Vagina (tissue), 2 donors: ENCODE measurements at regions of chr4 and their contacts with region 1.

Region 1: GRCh38 chr4:174496631-174497432 is 25.5 kb downstream of the HPGD start:
- DNase-seq: no peak
- H3K4me3 ChIP-seq: no peak overlapping the region
- H3K27ac ChIP-seq: no peak overlapping the region
- H3K4me1 ChIP-seq: no peaks in the 10 kb centered on the region
- H3K27me3 ChIP-seq: no peaks in the 10 kb centered on the region
- CTCF ChIP-seq: no peak
- POLR2A ChIP-seq: no peak

Region 2: DNA sequence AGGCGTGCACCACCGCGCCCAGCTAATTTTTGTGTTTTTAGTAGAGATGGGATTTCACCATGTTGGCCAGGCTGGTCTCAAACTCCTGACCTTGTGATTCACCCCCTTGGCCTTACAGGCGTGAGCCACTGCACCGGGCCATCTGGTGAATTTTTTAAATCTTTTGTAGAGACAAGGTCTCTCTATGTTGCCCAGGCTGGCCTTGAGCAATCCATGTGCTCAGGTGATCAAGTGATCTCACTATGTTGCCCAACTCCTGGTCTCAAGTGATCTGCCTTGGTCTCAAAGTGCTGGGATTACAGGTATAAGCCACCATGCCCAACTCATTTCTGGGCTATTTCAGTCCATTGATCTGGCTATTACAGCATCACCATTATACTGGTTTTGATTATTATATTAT is 1350.4 kb before region 1 on chr4:
- intact Hi-C with region 1: no loop called
- DNase-seq: no peak
- H3K4me3 ChIP-seq: no peak overlapping the region
- H3K27ac ChIP-seq: no peak overlapping the region
- H3K4me1 ChIP-seq: no peaks in the 10 kb centered on the region
- H3K27me3 ChIP-seq: no peaks in the 10 kb centered on the region
- CTCF ChIP-seq: no peak
- POLR2A ChIP-seq: no peak

Region 3: GRCh38 chr4:174474462-174475189 is 22.2 kb before region 1 on chr4:
- intact Hi-C with region 1: loop called (anchors 2 kb)
- DNase-seq: no peak
- H3K4me3 ChIP-seq: no peak overlapping the region
- H3K27ac ChIP-seq: no peak overlapping the region
- H3K4me1 ChIP-seq: no peaks in the 10 kb centered on the region
- H3K27me3 ChIP-seq: no peaks in the 10 kb centered on the region
- CTCF ChIP-seq: no peak
- POLR2A ChIP-seq: no peak